T-cell (primary cell): ENCODE measurements at regions of chr21 and their contacts with region 1.

Region 1: GRCh38 chr21:31580866-31581276 is 78.6 kb upstream of the SOD1 start:
- DNase-seq: peak; percentile 31 to 84 (median 62)
- ATAC-seq: peak; percentile 78 to 85 (median 82)
- H3K4me3 ChIP-seq: no peak overlapping the region
- H3K4me3 Mint-ChIP-seq: no peak overlapping the region
- H3K27ac ChIP-seq: no peak overlapping the region
- H3K27ac Mint-ChIP-seq: no peak overlapping the region
- H3K4me1 ChIP-seq: no peaks in the 10 kb centered on the region
- H3K4me1 Mint-ChIP-seq: peaks cover 0 to 5% (median 4%) of the 10 kb centered on the region in 3 donors
- H3K27me3 ChIP-seq: no peaks in the 10 kb centered on the region
- H3K27me3 Mint-ChIP-seq: peaks cover 0 to 4% of the 10 kb centered on the region in 2 donors

Region 2: GRCh38 chr21:31098576-31099005 is 482.3 kb before region 1 on chr21:
- CTCF ChIA-PET with region 1: interaction called, 12 to 34 read pairs
- POLR2A ChIA-PET with region 1: no interaction called
- DNase-seq: peak; percentile 12 to 83 (median 61)
- ATAC-seq: peak; percentile 74 to 81 (median 78)
- H3K4me3 ChIP-seq: no peak overlapping the region
- H3K4me3 Mint-ChIP-seq: peak overlapping the region in 2 of 3 donors; percentile 3 to 51
- H3K27ac ChIP-seq: no peak overlapping the region
- H3K27ac Mint-ChIP-seq: peak overlapping the region; percentile 1 to 62
- H3K4me1 ChIP-seq: peaks cover 12 to 16% of the 10 kb centered on the region in 2 experiments
- H3K4me1 Mint-ChIP-seq: peaks cover 23 to 31% (median 26%) of the 10 kb centered on the region in 3 donors
- H3K27me3 ChIP-seq: peaks cover 0 to 17% of the 10 kb centered on the region in 2 experiments
- H3K27me3 Mint-ChIP-seq: peaks cover 2 to 4% of the 10 kb centered on the region in 2 donors

Region 3: DNA sequence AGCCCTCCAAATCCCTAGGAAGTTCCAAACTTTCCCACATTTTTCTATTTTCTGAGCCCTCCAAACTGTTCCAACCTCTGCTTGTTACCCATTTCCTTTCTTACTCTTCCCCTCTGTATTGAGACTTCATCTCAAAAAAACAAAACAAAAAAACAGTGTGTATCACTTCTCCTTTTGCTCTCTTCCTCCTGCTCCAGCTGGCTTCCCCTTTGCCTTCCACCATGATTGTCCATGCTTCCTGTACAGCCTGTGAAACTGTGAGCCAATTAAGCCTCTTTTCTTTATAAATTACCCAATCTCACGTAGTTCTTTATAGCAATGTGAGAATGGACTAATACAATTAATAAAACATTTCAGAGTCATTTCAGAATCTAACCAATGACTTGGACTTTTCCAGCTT is 473.0 kb before region 1 on chr21:
- CTCF ChIA-PET with region 1: interaction called in 1 of 2 experiments, 10 read pairs
- POLR2A ChIA-PET with region 1: no interaction called
- DNase-seq: no peak
- ATAC-seq: no peak
- H3K4me3 ChIP-seq: no peak overlapping the region
- H3K4me3 Mint-ChIP-seq: no peak overlapping the region
- H3K27ac ChIP-seq: no peak overlapping the region
- H3K27ac Mint-ChIP-seq: no peak overlapping the region
- H3K4me1 ChIP-seq: peaks cover 5 to 9% of the 10 kb centered on the region in 2 experiments
- H3K4me1 Mint-ChIP-seq: peaks cover 12 to 31% (median 14%) of the 10 kb centered on the region in 3 donors
- H3K27me3 ChIP-seq: no peaks in the 10 kb centered on the region
- H3K27me3 Mint-ChIP-seq: no peaks in the 10 kb centered on the region

Region 4: GRCh38 chr21:31198575-31198974 is 382.3 kb before region 1 on chr21:
- CTCF ChIA-PET with region 1: interaction called, 40 to 45 read pairs
- POLR2A ChIA-PET with region 1: no interaction called
- DNase-seq: peak in 2 of 35 experiments; percentile 20 to 69
- ATAC-seq: peak; percentile 48 to 67 (median 58)
- H3K4me3 ChIP-seq: no peak overlapping the region
- H3K4me3 Mint-ChIP-seq: no peak overlapping the region
- H3K27ac ChIP-seq: no peak overlapping the region
- H3K27ac Mint-ChIP-seq: no peak overlapping the region
- H3K4me1 ChIP-seq: no peaks in the 10 kb centered on the region
- H3K4me1 Mint-ChIP-seq: peaks cover 19 to 39% (median 29%) of the 10 kb centered on the region in 3 donors
- H3K27me3 ChIP-seq: no peaks in the 10 kb centered on the region
- H3K27me3 Mint-ChIP-seq: no peaks in the 10 kb centered on the region

Region 5: GRCh38 chr21:31213795-31214194 is 367.1 kb before region 1 on chr21:
- CTCF ChIA-PET with region 1: interaction called, 3 to 19 read pairs
- POLR2A ChIA-PET with region 1: no interaction called
- DNase-seq: peak in 1 of 35 experiments; percentile 39
- ATAC-seq: peak in 3 of 4 experiments; percentile 42 to 61 (median 45)
- H3K4me3 ChIP-seq: no peak overlapping the region
- H3K4me3 Mint-ChIP-seq: no peak overlapping the region
- H3K27ac ChIP-seq: no peak overlapping the region
- H3K27ac Mint-ChIP-seq: no peak overlapping the region
- H3K4me1 ChIP-seq: no peaks in the 10 kb centered on the region
- H3K4me1 Mint-ChIP-seq: no peaks in the 10 kb centered on the region
- H3K27me3 ChIP-seq: no peaks in the 10 kb centered on the region
- H3K27me3 Mint-ChIP-seq: no peaks in the 10 kb centered on the region

Region 6: GRCh38 chr21:31592516-31592915 is 11.6 kb after region 1 on chr21:
- CTCF ChIA-PET with region 1: interaction called in 1 of 2 experiments, 11 read pairs
- POLR2A ChIA-PET with region 1: no interaction called
- DNase-seq: no peak
- ATAC-seq: no peak
- H3K4me3 ChIP-seq: no peak overlapping the region
- H3K4me3 Mint-ChIP-seq: no peak overlapping the region
- H3K27ac ChIP-seq: no peak overlapping the region
- H3K27ac Mint-ChIP-seq: no peak overlapping the region
- H3K4me1 ChIP-seq: no peaks in the 10 kb centered on the region
- H3K4me1 Mint-ChIP-seq: peaks cover 0 to 4% (median 0%) of the 10 kb centered on the region in 3 donors
- H3K27me3 ChIP-seq: peaks cover 0 to 2% of the 10 kb centered on the region in 2 experiments
- H3K27me3 Mint-ChIP-seq: peaks cover 0 to 2% of the 10 kb centered on the region in 2 donors